ENCODE measurements at regions of chr21 and their contacts with region 1.

Region 1: GRCh38 chr21:44510508-44511210 is 29.3 kb downstream of the KRTAP10-1 start:
- DNase-seq: peak; percentile 74 to 86 (median 80)
- H3K4me3 ChIP-seq: peak overlapping the region; percentile 54
- H3K4me3 Mint-ChIP-seq: peak overlapping the region; percentile 40 to 64 (median 52)
- H3K27ac ChIP-seq: no peak overlapping the region
- H3K27ac Mint-ChIP-seq: no peak overlapping the region
- H3K4me1 ChIP-seq: peaks cover 11% of the 10 kb centered on the region
- H3K4me1 Mint-ChIP-seq: peaks cover 0 to 6% (median 0%) of the 10 kb centered on the region in 3 donors
- H3K27me3 ChIP-seq: no peaks in the 10 kb centered on the region
- H3K27me3 Mint-ChIP-seq: peaks cover 0 to 2% of the 10 kb centered on the region in 2 donors

Region 2: GRCh38 chr21:44618504-44618903 is 107.8 kb after region 1 on chr21:
- CTCF ChIA-PET with region 1: interaction called, 14 read pairs
- POLR2A ChIA-PET with region 1: no interaction called
- DNase-seq: no peak
- H3K4me3 ChIP-seq: peak overlapping the region; percentile 5
- H3K4me3 Mint-ChIP-seq: peak overlapping the region; percentile 16 to 86 (median 73)
- H3K27ac ChIP-seq: peak overlapping the region; percentile 57
- H3K27ac Mint-ChIP-seq: peak overlapping the region; percentile 70 to 95 (median 91)
- H3K4me1 ChIP-seq: peaks cover 47% of the 10 kb centered on the region
- H3K4me1 Mint-ChIP-seq: peaks cover 44 to 62% (median 54%) of the 10 kb centered on the region in 3 donors
- H3K27me3 ChIP-seq: no peaks in the 10 kb centered on the region
- H3K27me3 Mint-ChIP-seq: peaks cover 0 to 2% of the 10 kb centered on the region in 2 donors

Region 3: DNA sequence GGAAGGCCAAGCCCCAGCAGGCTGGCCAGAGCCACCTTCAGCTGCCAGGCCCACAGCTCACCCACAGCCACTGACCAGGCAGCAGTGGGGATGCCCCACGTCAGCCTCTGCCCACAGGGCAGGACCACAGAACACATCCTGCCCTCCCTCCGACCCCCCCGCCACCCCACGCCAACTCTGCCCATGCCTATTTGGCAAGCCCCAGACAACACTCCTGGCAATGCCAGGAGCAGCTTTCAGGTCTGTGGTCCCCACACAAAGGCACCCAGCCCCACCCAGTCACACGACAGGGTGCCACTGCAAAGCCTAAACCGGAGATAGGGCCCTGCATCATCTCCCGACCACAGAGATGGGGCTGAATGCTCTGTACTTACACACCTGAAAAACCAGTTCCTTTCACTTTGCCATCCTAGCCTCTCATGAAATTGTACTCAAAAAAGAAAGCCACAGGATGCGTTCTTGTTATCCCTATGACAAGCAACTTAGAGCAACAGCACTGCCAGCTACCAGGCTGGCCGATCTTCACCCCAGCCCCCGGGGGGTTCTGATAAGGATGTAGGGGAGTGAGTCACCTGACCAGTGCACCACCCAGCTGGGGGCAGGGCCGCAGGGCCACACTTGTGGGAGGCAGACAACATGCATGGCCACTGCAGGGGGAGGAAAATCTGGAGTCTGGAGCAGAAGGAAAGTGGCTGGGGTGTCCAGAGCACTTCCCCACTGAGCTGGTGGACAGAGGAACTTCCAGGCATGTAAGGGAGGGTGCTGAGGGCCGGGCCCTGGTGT is 254.8 kb after region 1 on chr21:
- CTCF ChIA-PET with region 1: interaction called, 11 read pairs
- POLR2A ChIA-PET with region 1: no interaction called
- DNase-seq: peak; percentile 16 to 80 (median 71)
- H3K4me3 ChIP-seq: no peak overlapping the region
- H3K4me3 Mint-ChIP-seq: peak overlapping the region in 6 of 7 donors; percentile 64 to 81 (median 73)
- H3K27ac ChIP-seq: no peak overlapping the region
- H3K27ac Mint-ChIP-seq: peak overlapping the region; percentile 75 to 97 (median 96)
- H3K4me1 ChIP-seq: peaks cover 20% of the 10 kb centered on the region
- H3K4me1 Mint-ChIP-seq: peaks cover 11 to 22% (median 16%) of the 10 kb centered on the region in 3 donors
- H3K27me3 ChIP-seq: no peaks in the 10 kb centered on the region
- H3K27me3 Mint-ChIP-seq: no peaks in the 10 kb centered on the region

Region 4: DNA sequence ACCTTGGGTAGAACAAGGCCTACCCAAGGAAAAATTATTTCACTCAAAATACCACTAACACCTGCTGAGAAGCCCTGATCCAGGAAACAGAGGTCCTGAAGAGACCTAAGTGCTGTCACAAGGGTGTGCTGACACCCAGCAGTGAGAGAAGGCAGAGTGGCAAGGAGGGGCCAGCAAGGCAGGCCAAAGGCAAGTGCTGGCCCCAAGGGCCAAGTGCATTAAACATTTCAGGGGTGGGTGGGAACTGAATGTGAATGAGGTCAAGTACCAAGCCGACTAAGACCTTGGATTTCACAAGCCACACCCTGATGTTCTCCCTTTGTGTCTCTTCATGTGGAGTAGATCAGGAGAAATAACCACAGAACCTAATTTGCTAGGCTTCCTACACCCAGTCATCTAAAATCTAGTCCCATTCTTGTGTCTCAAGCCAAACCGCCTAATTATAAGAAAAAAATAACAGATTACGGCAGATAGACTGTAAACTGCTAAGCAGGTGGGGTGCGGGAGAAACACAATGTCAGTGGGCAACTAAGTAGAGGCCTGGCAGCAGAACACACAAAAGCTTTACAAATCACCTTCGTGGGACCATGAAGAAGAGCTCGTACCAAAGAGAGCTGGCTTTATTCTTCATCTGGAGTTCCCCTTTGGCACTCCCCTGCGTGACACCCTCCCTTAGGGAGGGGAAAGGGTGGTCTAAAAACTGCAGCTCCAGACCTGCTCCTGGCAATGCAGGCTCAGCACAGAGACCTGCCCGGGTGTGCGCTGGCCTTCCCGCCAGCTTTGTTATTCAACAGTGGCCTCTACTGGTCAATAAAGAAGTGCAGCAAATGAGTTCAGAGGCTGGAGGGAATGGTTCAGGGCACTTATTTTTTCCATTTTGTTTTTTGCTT is 282.3 kb after region 1 on chr21:
- CTCF ChIA-PET with region 1: interaction called, 63 read pairs
- POLR2A ChIA-PET with region 1: no interaction called
- DNase-seq: peak; percentile 23 to 65 (median 48)
- H3K4me3 ChIP-seq: no peak overlapping the region
- H3K4me3 Mint-ChIP-seq: peak overlapping the region in 1 of 7 donors; percentile 18
- H3K27ac ChIP-seq: no peak overlapping the region
- H3K27ac Mint-ChIP-seq: peak overlapping the region; percentile 6 to 84 (median 61)
- H3K4me1 ChIP-seq: peaks cover 8% of the 10 kb centered on the region
- H3K4me1 Mint-ChIP-seq: peaks cover 39 to 72% (median 44%) of the 10 kb centered on the region in 3 donors
- H3K27me3 ChIP-seq: no peaks in the 10 kb centered on the region
- H3K27me3 Mint-ChIP-seq: peaks cover 0 to 3% of the 10 kb centered on the region in 2 donors